PC-3 (cell line): ENCODE measurements at regions of chr13 and their contacts with region 1.

Region 1: GRCh38 chr13:95834134-95834765 is 157.3 kb downstream of the DNAJC3 start:
- DNase-seq: peak; percentile 61
- ATAC-seq: peak; percentile 75
- H3K4me3 ChIP-seq: no peak overlapping the region
- H3K27ac ChIP-seq: no peak overlapping the region
- H3K4me1 ChIP-seq: peaks cover 13% of the 10 kb centered on the region
- H3K27me3 ChIP-seq: no peaks in the 10 kb centered on the region
- CTCF ChIP-seq: peak; percentile 80

Region 2: DNA sequence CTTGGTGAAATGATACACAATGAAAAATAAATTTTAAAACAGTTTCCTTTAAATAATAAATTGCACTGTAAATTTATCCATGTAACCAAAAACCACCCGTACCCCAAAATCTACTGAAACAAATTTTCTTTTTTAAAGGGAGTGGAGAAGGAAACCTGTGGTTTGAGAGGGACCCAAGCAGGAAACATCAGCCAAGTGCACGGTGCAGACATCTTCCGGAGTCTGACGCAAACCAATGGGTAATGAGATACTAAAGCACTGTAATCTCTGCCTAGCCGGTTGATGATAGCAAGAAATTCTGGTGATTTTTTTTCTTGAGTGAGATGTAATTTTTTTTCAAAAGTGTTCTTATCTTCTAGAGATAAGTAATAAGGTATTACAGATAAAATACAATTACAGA is 648.4 kb before region 1 on chr13:
- CTCF ChIA-PET with region 1: no interaction called
- POLR2A ChIA-PET with region 1: no interaction called
- intact Hi-C with region 1: loop called (anchors 5 kb)
- DNase-seq: no peak
- ATAC-seq: no peak
- H3K4me3 ChIP-seq: no peak overlapping the region
- H3K27ac ChIP-seq: no peak overlapping the region
- H3K4me1 ChIP-seq: no peaks in the 10 kb centered on the region
- H3K27me3 ChIP-seq: no peaks in the 10 kb centered on the region
- CTCF ChIP-seq: no peak

Region 3: GRCh38 chr13:95207769-95208366 is 626.4 kb before region 1 on chr13:
- CTCF ChIA-PET with region 1: no interaction called
- POLR2A ChIA-PET with region 1: no interaction called
- intact Hi-C with region 1: no loop called
- DNase-seq: no peak
- ATAC-seq: no peak
- H3K4me3 ChIP-seq: no peak overlapping the region
- H3K27ac ChIP-seq: no peak overlapping the region
- H3K4me1 ChIP-seq: no peaks in the 10 kb centered on the region
- H3K27me3 ChIP-seq: no peaks in the 10 kb centered on the region
- CTCF ChIP-seq: no peak

Region 4: DNA sequence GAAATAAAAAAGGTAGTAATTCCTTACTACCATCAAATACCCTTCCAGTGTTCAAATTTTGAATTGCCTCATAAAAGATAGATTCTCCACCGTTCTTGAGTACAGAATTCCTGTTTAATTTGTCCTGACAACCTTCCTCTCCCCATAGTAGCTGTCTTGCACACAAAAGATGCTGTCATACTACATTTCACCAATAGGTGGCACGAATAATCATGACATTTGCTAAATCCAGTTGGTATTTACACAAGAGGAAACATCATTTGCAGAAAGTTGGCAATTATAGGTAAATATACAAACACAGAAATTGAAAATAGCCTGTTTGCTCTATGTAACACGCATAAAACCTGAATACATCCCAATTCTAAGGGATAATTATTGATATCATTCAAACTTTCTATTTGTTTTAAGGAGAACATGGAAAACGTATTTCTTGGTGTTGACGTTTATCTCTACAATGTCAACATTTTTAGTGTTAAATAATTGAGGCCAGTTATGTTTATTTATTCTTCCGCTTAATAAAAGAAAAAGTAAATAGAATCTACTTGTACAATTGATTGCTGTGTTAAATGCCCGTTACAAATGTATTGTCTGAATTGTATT is 340.1 kb before region 1 on chr13:
- CTCF ChIA-PET with region 1: no interaction called
- POLR2A ChIA-PET with region 1: no interaction called
- intact Hi-C with region 1: loop called (anchors 10 kb)
- DNase-seq: peak; percentile 83
- ATAC-seq: peak; percentile 72
- H3K4me3 ChIP-seq: no peak overlapping the region
- H3K27ac ChIP-seq: no peak overlapping the region
- H3K4me1 ChIP-seq: no peaks in the 10 kb centered on the region
- H3K27me3 ChIP-seq: no peaks in the 10 kb centered on the region
- CTCF ChIP-seq: peak; percentile 77

Region 5: GRCh38 chr13:95624020-95624419 is 210.2 kb before region 1 on chr13:
- CTCF ChIA-PET with region 1: interaction called, 22 read pairs
- POLR2A ChIA-PET with region 1: interaction called, 6 read pairs
- intact Hi-C with region 1: loop called (anchors 1 kb)
- DNase-seq: peak; percentile 58
- ATAC-seq: peak; percentile 70
- H3K4me3 ChIP-seq: no peak overlapping the region
- H3K27ac ChIP-seq: no peak overlapping the region
- H3K4me1 ChIP-seq: no peaks in the 10 kb centered on the region
- H3K27me3 ChIP-seq: no peaks in the 10 kb centered on the region
- CTCF ChIP-seq: peak; percentile 59

Region 6: DNA sequence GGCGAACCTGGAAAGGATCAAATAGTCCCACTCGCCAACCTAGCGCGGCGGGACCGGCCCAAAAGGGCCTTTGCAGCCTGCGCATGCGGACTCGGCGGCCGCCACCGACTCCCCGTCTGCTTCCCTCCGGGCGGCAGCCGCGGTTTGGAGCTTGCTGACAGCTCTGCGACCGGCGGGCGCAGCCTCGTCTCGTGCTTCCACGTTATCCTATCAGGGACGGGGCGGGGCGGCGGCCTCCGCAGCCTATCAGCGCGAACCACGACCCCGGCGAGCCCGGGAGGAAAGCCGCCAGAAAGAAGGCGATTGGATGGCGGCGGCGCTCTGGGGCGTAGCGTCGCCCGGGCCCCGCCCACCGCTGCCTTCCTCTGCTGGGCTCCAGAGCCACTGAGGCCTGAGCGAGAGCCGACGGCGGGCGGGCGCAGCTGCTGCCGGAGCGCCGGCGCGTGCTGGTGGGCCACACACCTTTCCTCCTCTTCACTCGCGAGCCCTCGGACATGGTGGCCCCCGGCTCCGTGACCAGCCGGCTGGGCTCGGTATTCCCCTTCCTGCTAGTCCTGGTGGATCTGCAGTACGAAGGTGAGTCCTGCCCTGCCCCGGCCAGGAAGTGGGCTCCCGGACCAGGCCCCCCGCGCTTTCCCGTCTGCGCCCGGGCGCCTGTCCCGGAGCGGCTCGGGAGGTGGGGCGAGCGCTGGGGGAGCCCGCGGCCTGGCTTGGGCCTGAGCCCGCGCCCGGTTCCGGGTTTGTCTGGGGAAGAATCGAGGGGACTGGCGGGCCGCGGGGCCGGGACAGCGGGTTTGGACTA is 157.3 kb before region 1 on chr13 and contains the start of gene DNAJC3:
- CTCF ChIA-PET with region 1: interaction called, 5 read pairs
- POLR2A ChIA-PET with region 1: interaction called, 3 read pairs
- intact Hi-C with region 1: loop called (anchors 5 kb)
- DNase-seq: peak; percentile 94
- ATAC-seq: peak; percentile 93
- H3K4me3 ChIP-seq: peak within 1 kb of the TSS; percentile 98
- H3K27ac ChIP-seq: peak within 1 kb of the TSS; percentile 71
- H3K4me1 ChIP-seq: peaks cover 35% of the 10 kb centered on the region
- H3K27me3 ChIP-seq: no peaks in the 10 kb centered on the region
- CTCF ChIP-seq: no peak
- total RNA-seq, gene DNAJC3: 17.8 and 20.5 TPM in 2 replicates

Region 7: DNA sequence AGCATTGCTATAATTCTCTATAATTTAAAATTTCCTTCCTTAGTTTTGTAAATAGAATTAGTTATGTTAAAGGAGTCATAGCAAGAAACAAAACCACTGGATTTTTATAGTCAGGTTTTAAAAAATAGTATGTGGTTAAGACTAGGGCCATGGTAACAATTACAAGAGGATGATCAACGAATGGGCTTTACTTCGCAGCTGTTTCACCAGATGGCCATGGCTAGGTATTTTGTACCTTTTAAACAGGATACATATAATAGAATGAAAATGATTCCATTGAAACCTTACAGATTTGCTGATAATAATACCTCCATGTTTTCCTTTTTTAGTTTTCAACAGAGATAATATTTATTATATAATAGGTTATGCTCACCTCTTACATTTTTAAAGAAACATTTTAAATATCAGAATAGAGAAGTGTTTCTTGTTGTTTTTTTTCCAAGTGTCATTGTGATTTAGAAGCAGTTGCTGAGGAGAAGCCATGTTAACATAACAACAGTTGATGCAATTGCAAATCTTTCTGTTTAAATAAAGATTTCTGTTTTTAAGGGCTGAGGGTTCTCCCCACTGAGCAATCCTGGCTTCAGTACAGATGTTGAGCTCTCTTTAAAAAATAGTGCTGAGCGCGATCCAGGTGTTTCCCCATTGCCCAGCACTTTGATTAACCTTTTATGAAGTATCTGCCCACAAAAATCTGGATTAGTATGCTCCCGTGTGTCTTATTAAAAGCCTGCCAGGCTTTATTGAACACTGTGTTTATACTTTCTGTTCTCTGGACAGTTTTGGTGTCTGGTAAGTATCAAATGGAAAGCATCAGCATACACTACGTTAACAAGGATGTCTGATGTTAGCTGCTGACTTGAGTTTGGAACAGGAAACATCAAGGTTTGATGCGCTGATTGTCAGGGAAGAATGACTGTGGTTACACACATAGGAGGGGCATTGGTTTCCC is 461.0 kb after region 1 on chr13:
- CTCF ChIA-PET with region 1: no interaction called
- POLR2A ChIA-PET with region 1: no interaction called
- intact Hi-C with region 1: no loop called
- DNase-seq: no peak
- ATAC-seq: no peak
- H3K4me3 ChIP-seq: no peak overlapping the region
- H3K27ac ChIP-seq: no peak overlapping the region
- H3K4me1 ChIP-seq: no peaks in the 10 kb centered on the region
- H3K27me3 ChIP-seq: no peaks in the 10 kb centered on the region
- CTCF ChIP-seq: no peak